OCI-LY7 (cell line): ENCODE measurements at regions of chr13 and their contacts with region 1.

Region 1: GRCh38 chr13:77737583-77738200 is 40.2 kb downstream of the SLAIN1 start:
- DNase-seq: no peak
- H3K4me3 ChIP-seq: no peak overlapping the region
- H3K27ac ChIP-seq: no peak overlapping the region
- H3K4me1 ChIP-seq: no peaks in the 10 kb centered on the region
- CTCF ChIP-seq: no peak

Region 2: DNA sequence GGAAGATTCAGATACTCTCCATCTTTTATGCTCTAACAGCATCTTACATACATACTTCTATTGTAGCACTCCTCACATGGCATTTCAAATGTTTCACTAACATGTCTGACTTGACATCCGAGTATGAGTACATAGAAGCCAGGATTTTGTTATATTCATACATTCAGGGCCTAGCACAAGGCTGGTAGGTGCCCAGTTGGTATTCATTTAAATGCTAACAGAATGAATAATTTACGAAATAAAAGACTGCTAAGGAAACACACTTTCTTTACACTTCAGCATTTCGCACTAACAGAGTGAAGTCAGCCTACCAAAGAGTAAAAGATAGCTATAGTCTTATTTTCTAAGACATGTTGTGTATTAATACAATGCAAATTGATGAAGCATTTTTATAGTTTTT is 642.9 kb before region 1 on chr13:
- CTCF ChIA-PET with region 1: no interaction called
- POLR2A ChIA-PET with region 1: no interaction called
- intact Hi-C with region 1: loop called (anchors 5 kb)
- DNase-seq: no peak
- H3K4me3 ChIP-seq: no peak overlapping the region
- H3K27ac ChIP-seq: no peak overlapping the region
- H3K4me1 ChIP-seq: no peaks in the 10 kb centered on the region
- CTCF ChIP-seq: no peak

Region 3: GRCh38 chr13:77980592-77980991 is 242.9 kb after region 1 on chr13:
- CTCF ChIA-PET with region 1: no interaction called
- POLR2A ChIA-PET with region 1: no interaction called
- intact Hi-C with region 1: no loop called
- DNase-seq: no peak
- H3K4me3 ChIP-seq: no peak overlapping the region
- H3K27ac ChIP-seq: no peak overlapping the region
- H3K4me1 ChIP-seq: no peaks in the 10 kb centered on the region
- CTCF ChIP-seq: no peak

Region 4: DNA sequence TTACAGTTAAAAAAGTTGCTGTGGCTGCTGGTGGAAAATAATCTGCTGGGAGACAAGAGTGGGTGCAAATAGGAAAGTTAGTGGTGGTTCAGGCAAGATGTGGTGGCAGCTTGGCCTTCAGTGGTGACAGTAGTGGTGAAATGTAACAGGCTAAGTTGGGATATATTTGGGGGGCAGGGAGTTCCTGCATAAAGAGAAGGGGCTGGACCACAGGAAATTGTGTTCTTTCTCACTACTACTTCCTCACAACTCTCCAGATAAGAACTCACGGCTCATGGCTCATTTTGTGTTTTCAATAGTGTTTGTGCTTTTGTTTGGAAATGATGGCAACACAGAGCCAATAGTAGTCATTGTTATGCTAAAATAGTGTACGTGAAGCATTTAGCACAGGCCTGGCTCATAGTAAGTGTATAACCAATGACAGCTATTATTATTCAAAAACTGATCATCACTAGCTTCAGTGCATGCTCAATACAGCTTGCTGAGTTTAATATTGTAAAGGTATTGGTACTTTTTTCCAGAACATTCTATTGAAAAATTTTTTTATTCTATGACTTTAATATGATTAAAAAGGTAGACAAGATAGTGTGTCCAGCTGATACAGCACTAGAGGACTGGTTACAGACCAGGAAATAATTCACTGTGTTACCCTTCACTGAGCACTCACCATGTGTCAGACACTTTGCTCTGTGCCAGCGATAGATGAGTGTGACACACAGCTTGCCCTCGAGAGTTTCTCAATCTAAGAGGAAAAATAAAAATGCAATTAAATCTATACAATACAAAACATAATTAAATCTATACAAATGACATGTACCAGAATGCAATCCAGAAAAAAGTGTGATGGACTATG is 655.8 kb after region 1 on chr13:
- CTCF ChIA-PET with region 1: no interaction called
- POLR2A ChIA-PET with region 1: no interaction called
- intact Hi-C with region 1: no loop called
- DNase-seq: no peak
- H3K4me3 ChIP-seq: no peak overlapping the region
- H3K27ac ChIP-seq: no peak overlapping the region
- H3K4me1 ChIP-seq: no peaks in the 10 kb centered on the region
- CTCF ChIP-seq: no peak